ENCODE measurements at regions of chr22 and their contacts with region 1.

Region 1: DNA sequence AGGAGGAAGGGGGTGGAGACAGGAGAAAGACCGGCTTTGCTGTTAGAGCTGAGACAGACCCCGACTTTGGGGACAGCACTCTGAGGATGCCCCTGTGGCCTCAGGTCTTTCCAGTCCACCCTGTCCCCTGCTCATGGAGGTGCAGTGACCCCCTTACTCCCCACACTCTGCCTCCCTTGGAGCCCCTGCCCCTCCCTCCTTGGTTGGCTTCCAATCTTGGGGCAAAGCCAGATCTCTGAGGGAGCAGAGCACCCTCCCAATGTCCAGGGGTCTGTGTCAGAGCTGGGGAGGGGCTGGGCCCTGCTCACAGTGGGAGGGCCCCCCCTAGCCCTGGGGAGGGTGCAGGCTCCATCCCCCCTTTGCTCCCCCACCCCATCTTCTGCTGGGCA is 50.0 kb downstream of the IGLL1 start:
- DNase-seq: no peak
- H3K4me3 ChIP-seq: no peak overlapping the region
- H3K27ac ChIP-seq: no peak overlapping the region
- H3K4me1 ChIP-seq: no peaks in the 10 kb centered on the region
- H3K27me3 ChIP-seq: peaks cover 87% of the 10 kb centered on the region
- CTCF ChIP-seq: no peak

Region 2: DNA sequence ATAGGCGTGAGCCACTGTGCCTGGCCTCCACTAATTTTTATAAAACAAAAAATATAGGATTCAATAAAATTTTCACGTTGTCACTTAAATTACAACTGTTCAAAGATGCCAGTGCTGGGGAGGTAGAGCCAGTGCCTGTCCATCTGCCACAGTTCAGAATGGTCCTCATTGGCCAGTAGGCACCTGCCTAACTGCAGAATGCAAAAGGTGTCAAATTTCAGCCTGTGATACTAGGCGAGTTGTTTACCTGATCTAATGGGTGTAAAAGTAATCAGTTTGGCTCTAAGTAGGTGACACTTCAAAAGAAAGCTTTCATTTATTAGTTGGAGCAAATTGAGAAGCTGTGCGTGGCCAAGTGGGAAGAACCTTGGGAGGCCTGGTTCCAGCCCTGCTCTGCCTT is 259.0 kb after region 1 on chr22:
- CTCF ChIA-PET with region 1: interaction called, 14 read pairs
- POLR2A ChIA-PET with region 1: no interaction called
- intact Hi-C with region 1: no loop called
- DNase-seq: no peak
- H3K4me3 ChIP-seq: no peak overlapping the region
- H3K27ac ChIP-seq: no peak overlapping the region
- H3K4me1 ChIP-seq: peaks cover 21% of the 10 kb centered on the region
- H3K27me3 ChIP-seq: no peaks in the 10 kb centered on the region
- CTCF ChIP-seq: no peak

Measured in PC-9 (cell line).